CD4-positive, alpha-beta T cell (primary cell): ENCODE measurements at regions of chr11 and their contacts with region 1.

Region 1: DNA sequence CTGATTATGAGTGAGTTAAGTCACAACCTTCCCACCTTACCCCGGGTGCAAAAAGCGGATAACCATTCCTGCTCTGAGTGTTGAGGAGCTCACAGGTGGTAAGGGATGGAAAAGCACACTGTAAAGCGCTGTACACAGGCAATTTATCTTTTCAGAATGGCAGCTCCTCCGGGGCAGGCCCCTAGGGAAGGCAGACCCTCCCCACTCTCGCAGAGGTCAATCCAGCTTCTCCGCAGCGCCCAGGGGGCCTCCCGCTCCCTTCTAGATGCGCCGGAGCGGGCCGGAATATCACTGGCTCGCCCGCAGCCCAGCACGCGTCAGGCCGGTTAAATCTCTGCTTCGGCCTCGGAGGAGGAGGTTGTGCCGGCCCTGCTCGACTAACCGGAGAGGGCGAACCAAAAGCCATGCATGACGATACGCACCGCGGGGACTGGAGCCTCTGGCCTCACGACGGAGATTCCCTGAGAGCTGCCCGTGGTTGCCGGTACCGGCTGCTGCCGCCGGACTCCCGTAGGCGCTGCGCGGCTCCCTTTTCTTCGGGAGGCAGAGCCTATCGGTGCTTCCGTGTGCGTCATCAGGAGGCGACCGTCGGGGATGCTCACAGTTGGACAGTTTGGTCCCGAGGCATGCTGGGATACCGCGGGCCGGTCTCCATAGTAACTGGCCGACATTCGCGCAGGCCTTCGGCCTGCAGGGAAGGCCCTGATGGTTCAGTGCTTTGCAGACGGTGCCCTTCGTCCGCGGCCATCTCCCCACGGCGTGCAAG is at the start of gene BRMS1:
- DNase-seq: peak; percentile 86 to 98 (median 96)
- ATAC-seq: peak; percentile 80
- H3K4me3 ChIP-seq: peak within 1 kb of the TSS; percentile 100
- H3K4me3 Mint-ChIP-seq: peak within 1 kb of the TSS; percentile 97
- H3K27ac ChIP-seq: peak within 1 kb of the TSS; percentile 75 to 78
- H3K27ac Mint-ChIP-seq: peak within 1 kb of the TSS; percentile 94
- H3K4me1 ChIP-seq: peaks cover 56% of the 10 kb centered on the region
- H3K4me1 Mint-ChIP-seq: peaks cover 48% of the 10 kb centered on the region
- H3K27me3 ChIP-seq: no peaks in the 10 kb centered on the region
- H3K27me3 Mint-ChIP-seq: peaks cover 5% of the 10 kb centered on the region
- CTCF ChIP-seq: no peak
- total RNA-seq, gene BRMS1: 52.7 to 58.4 TPM

Region 2: DNA sequence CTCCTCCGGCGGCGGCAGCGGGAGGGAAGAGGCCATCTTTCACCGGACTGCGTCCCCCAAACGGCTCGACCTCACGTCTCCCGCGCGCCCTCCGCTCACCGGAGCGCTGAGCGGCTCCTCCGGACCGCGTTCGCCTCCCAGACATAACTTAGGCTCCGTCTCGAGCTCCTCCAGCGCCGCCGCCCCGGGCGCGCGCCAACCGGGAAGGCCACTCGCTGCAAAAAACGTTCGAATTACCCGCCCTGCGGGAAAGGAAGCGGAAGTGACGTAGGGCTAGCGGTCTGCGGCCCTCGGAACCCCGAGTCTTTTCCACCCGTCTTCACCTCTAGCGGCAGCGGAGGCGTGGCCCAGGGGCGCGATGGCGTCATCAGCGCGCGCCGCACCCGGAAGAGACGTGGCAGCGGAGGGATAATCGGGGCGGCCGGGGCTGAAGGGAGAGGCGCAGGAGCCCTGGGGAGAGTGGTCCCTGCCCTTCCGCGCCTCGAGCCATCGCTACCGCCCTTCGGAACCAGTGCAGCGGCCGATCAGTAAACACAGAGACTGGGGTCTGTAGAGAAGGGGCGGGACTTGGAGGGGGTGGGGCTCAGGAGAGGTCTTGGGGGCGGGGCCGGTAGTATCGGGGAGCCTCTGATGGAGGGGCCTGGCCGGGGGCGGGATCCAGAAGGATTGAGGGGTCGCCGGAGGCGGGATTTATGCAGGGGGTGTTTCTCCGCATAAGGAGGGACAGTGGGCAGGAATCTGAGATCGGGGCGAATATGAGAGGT is 1260.7 kb before region 1 on chr11 and contains the starts of genes CDCA5 and ZFPL1:
- CTCF ChIA-PET with region 1: no interaction called
- POLR2A ChIA-PET with region 1: no interaction called
- intact Hi-C with region 1: loop called in 1 of 2 experiments (anchors 10 kb)
- DNase-seq: peak; percentile 92 to 98 (median 95)
- ATAC-seq: peak; percentile 87
- H3K4me3 ChIP-seq: peak within 1 kb of the TSS; percentile 80
- H3K4me3 Mint-ChIP-seq: peak within 1 kb of the TSS; percentile 98
- H3K27ac ChIP-seq: peak within 1 kb of the TSS; percentile 86 to 97
- H3K27ac Mint-ChIP-seq: peak within 1 kb of the TSS; percentile 97
- H3K4me1 ChIP-seq: peaks cover 21% of the 10 kb centered on the region
- H3K4me1 Mint-ChIP-seq: peaks cover 33% of the 10 kb centered on the region
- H3K27me3 ChIP-seq: no peaks in the 10 kb centered on the region
- H3K27me3 Mint-ChIP-seq: no peaks in the 10 kb centered on the region
- CTCF ChIP-seq: no peak
- total RNA-seq, gene CDCA5: 0.77 to 0.84 TPM
- total RNA-seq, gene ZFPL1: 46.2 to 47.7 TPM

Region 3: GRCh38 chr11:66288671-66289547 is 55.8 kb before region 1 on chr11 and contains the start of gene YIF1A:
- CTCF ChIA-PET with region 1: no interaction called
- POLR2A ChIA-PET with region 1: interaction called, 16 read pairs
- intact Hi-C with region 1: no loop called
- DNase-seq: peak; percentile 95 to 100 (median 97)
- ATAC-seq: peak; percentile 91
- H3K4me3 ChIP-seq: peak within 1 kb of the TSS; percentile 82
- H3K4me3 Mint-ChIP-seq: peak within 1 kb of the TSS; percentile 87
- H3K27ac ChIP-seq: peak within 1 kb of the TSS; percentile 69 to 80
- H3K27ac Mint-ChIP-seq: peak within 1 kb of the TSS; percentile 79
- H3K4me1 ChIP-seq: peaks cover 50% of the 10 kb centered on the region
- H3K4me1 Mint-ChIP-seq: peaks cover 32% of the 10 kb centered on the region
- H3K27me3 ChIP-seq: peaks cover 18 to 23% of the 10 kb centered on the region in 2 experiments
- H3K27me3 Mint-ChIP-seq: peaks cover 19% of the 10 kb centered on the region
- CTCF ChIP-seq: no peak
- total RNA-seq, gene YIF1A: 17.4 to 21.1 TPM

Region 4: GRCh38 chr11:66328307-66329144 is 16.2 kb before region 1 on chr11:
- CTCF ChIA-PET with region 1: no interaction called
- POLR2A ChIA-PET with region 1: no interaction called
- intact Hi-C with region 1: loop called in 1 of 2 experiments (anchors 1 kb)
- DNase-seq: peak; percentile 68 to 92 (median 77)
- ATAC-seq: peak; percentile 90
- H3K4me3 ChIP-seq: no peak overlapping the region
- H3K4me3 Mint-ChIP-seq: peak overlapping the region; percentile 42
- H3K27ac ChIP-seq: no peak overlapping the region
- H3K27ac Mint-ChIP-seq: peak overlapping the region; percentile 85
- H3K4me1 ChIP-seq: peaks cover 46% of the 10 kb centered on the region
- H3K4me1 Mint-ChIP-seq: peaks cover 39% of the 10 kb centered on the region
- H3K27me3 ChIP-seq: no peaks in the 10 kb centered on the region
- H3K27me3 Mint-ChIP-seq: no peaks in the 10 kb centered on the region
- CTCF ChIP-seq: peak; percentile 93

Region 5: DNA sequence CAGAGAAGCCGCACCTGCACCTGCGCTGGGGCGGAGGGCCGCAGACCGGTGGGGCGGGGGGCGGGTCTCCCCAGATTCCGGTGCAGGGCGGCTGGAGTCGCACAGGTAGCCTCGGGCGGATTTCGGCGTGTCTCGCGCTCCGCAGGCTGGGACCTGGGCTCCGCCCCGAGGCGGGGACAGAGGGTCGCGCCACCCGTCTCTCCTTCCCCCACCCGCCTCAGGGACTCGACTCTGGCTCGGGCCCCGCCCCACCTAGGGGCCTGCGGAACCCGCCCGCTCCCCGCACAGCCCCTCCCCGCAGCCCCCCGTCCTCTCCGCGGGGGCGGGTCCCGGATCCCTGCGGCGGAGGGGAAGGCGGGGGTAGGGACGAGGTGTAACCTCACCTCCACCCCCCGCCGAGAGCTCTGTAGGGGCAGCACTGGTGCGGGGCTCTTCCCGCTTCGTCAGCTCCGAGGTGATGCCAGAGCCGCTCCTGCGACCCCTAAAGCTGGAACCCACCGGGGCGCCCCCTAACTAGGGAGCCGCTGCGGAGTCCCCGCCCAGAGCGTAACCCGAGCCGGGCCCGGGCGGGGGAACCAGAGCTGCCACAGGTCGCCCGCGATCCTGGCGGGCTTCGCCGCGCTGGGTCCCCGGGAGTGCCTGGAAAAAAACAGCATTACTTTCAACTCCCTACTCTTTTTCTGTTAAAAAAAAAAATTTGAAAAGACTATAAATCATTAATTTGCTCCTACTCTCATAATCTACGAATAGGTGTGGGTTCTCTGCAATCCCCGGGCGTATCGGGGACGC is 27.1 kb after region 1 on chr11 and contains the start of gene SLC29A2:
- CTCF ChIA-PET with region 1: no interaction called
- POLR2A ChIA-PET with region 1: interaction called, 46 read pairs
- intact Hi-C with region 1: loop called (anchors 1 to 2 kb)
- DNase-seq: peak; percentile 50 to 89 (median 75)
- ATAC-seq: peak; percentile 73
- H3K4me3 ChIP-seq: peak within 1 kb of the TSS; percentile 79
- H3K4me3 Mint-ChIP-seq: peak within 1 kb of the TSS; percentile 97
- H3K27ac ChIP-seq: peak within 1 kb of the TSS; percentile 60 to 74
- H3K27ac Mint-ChIP-seq: peak within 1 kb of the TSS; percentile 92
- H3K4me1 ChIP-seq: peaks cover 16% of the 10 kb centered on the region
- H3K4me1 Mint-ChIP-seq: peaks cover 9% of the 10 kb centered on the region
- H3K27me3 ChIP-seq: no peaks in the 10 kb centered on the region
- H3K27me3 Mint-ChIP-seq: no peaks in the 10 kb centered on the region
- CTCF ChIP-seq: no peak
- total RNA-seq, gene SLC29A2: 9.7 TPM

Region 6: GRCh38 chr11:66386171-66387069 is 41.7 kb after region 1 on chr11:
- CTCF ChIA-PET with region 1: interaction called, 5 read pairs
- POLR2A ChIA-PET with region 1: interaction called, 6 read pairs
- intact Hi-C with region 1: loop called (anchors 5 kb)
- DNase-seq: peak; percentile 76 to 90 (median 82)
- ATAC-seq: peak; percentile 78
- H3K4me3 ChIP-seq: no peak overlapping the region
- H3K4me3 Mint-ChIP-seq: no peak overlapping the region
- H3K27ac ChIP-seq: no peak overlapping the region
- H3K27ac Mint-ChIP-seq: no peak overlapping the region
- H3K4me1 ChIP-seq: peaks cover 7% of the 10 kb centered on the region
- H3K4me1 Mint-ChIP-seq: peaks cover 6% of the 10 kb centered on the region
- H3K27me3 ChIP-seq: no peaks in the 10 kb centered on the region
- H3K27me3 Mint-ChIP-seq: peaks cover 10% of the 10 kb centered on the region
- CTCF ChIP-seq: peak; percentile 84

Region 7: DNA sequence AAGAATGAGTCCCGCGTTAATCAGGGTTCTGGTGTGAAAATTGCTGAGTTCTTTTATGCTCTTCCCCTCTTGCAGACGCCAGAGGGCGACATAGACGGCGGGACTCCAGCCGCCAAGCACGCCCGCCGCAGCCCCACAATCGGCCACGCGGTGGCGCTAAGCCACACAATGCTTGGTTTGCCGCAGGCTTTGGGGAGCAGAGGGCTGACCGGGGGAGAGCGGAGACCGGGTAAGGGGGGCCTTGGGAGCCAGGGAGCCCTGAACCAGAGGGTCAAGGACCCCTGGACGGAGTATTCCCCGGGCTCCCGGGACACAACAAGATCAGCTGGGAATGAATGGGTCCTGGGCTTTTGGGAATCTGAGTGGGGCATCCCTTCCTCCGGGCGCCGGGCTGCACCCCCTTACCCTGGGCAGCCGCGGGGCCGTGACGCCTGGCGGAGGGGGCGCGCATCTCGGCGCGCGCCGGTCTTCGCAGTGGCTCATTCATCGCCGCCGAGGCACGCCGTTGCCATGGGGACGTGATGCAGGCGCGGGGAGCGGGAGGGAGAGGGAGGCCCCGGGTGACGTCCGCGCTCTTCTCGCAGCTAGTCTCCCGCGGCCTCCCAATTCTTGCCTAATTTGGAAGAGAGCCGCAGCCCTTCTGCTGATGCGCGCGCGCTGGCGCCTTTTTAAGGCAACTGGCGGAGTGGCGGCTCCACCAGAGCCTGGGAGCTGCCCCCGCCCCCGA is 63.9 kb after region 1 on chr11:
- CTCF ChIA-PET with region 1: no interaction called
- POLR2A ChIA-PET with region 1: no interaction called
- intact Hi-C with region 1: no loop called
- DNase-seq: peak; percentile 84 to 97 (median 93)
- ATAC-seq: peak; percentile 88
- H3K4me3 ChIP-seq: peak overlapping the region; percentile 34
- H3K4me3 Mint-ChIP-seq: peak overlapping the region; percentile 84
- H3K27ac ChIP-seq: no peak overlapping the region
- H3K27ac Mint-ChIP-seq: no peak overlapping the region
- H3K4me1 ChIP-seq: peaks cover 14% of the 10 kb centered on the region
- H3K4me1 Mint-ChIP-seq: peaks cover 5% of the 10 kb centered on the region
- H3K27me3 ChIP-seq: peaks cover 2 to 19% of the 10 kb centered on the region in 2 experiments
- H3K27me3 Mint-ChIP-seq: peaks cover 50% of the 10 kb centered on the region
- CTCF ChIP-seq: peak; percentile 100

Region 8: GRCh38 chr11:66842896-66843775 is 498.4 kb after region 1 on chr11 and contains the start of gene RCE1:
- CTCF ChIA-PET with region 1: no interaction called
- POLR2A ChIA-PET with region 1: interaction called, 5 read pairs
- intact Hi-C with region 1: loop called (anchors 1 to 2 kb)
- DNase-seq: peak; percentile 80 to 98 (median 90)
- ATAC-seq: peak; percentile 82
- H3K4me3 ChIP-seq: peak within 1 kb of the TSS; percentile 96
- H3K4me3 Mint-ChIP-seq: peak within 1 kb of the TSS; percentile 94
- H3K27ac ChIP-seq: peak within 1 kb of the TSS; percentile 97 to 99
- H3K27ac Mint-ChIP-seq: peak within 1 kb of the TSS; percentile 96
- H3K4me1 ChIP-seq: peaks cover 49% of the 10 kb centered on the region
- H3K4me1 Mint-ChIP-seq: peaks cover 52% of the 10 kb centered on the region
- H3K27me3 ChIP-seq: no peaks in the 10 kb centered on the region
- H3K27me3 Mint-ChIP-seq: no peaks in the 10 kb centered on the region
- CTCF ChIP-seq: no peak
- total RNA-seq, gene RCE1: 60.1 to 63.0 TPM